ENCODE measurements at regions of chr2 and their contacts with region 1.

Region 1: DNA sequence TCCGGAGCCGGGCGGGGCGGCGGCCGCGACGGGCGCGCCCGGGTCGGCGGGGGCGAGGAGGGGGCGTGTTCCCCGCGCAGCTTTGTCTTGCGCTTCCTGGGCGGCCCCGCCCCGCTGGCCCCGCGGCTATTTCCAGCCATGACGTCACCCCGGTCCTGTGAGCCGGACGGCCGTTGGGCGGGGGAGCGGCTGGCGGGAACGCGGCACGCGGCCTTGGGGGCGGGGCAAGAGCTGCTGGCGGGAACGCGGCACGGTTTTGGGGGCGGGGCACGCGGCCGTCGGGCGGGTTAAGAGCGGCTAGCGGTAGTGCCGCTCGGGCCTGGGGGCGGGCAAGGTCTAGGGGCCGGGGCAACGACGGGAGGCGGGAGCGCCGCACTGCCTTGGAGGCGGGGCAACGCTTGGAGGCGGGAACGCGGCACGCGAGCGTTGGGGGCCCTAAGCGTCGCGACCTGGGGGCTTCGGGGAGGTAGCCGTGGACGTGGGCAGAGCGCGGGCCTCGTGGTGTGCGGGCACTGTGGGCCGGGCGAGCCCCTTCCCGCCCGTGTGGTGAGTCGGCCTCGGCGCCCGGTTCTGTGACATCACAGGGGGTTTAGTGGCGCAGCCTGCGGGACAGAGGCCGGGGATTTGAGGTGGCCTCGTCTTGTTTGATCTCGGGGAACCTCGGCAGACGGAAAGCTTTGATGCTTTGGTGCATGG is 704 bp downstream of the KLF11 start:
- DNase-seq: peak; percentile 90 to 97 (median 96)
- H3K4me3 ChIP-seq: peak overlapping the region; percentile 39 to 57 (median 44)
- H3K4me3 Mint-ChIP-seq: peak overlapping the region; percentile 73 to 79
- H3K27ac ChIP-seq: peak overlapping the region; percentile 66 to 79
- H3K27ac Mint-ChIP-seq: peak overlapping the region; percentile 13 to 98 (median 76)
- H3K4me1 ChIP-seq: peaks cover 16 to 34% of the 10 kb centered on the region in 2 donors
- H3K4me1 Mint-ChIP-seq: peaks cover 46% of the 10 kb centered on the region
- H3K27me3 ChIP-seq: no peaks in the 10 kb centered on the region
- H3K27me3 Mint-ChIP-seq: peaks cover 2 to 25% (median 11%) of the 10 kb centered on the region in 3 donors
- CTCF ChIP-seq: no peak

Region 2: DNA sequence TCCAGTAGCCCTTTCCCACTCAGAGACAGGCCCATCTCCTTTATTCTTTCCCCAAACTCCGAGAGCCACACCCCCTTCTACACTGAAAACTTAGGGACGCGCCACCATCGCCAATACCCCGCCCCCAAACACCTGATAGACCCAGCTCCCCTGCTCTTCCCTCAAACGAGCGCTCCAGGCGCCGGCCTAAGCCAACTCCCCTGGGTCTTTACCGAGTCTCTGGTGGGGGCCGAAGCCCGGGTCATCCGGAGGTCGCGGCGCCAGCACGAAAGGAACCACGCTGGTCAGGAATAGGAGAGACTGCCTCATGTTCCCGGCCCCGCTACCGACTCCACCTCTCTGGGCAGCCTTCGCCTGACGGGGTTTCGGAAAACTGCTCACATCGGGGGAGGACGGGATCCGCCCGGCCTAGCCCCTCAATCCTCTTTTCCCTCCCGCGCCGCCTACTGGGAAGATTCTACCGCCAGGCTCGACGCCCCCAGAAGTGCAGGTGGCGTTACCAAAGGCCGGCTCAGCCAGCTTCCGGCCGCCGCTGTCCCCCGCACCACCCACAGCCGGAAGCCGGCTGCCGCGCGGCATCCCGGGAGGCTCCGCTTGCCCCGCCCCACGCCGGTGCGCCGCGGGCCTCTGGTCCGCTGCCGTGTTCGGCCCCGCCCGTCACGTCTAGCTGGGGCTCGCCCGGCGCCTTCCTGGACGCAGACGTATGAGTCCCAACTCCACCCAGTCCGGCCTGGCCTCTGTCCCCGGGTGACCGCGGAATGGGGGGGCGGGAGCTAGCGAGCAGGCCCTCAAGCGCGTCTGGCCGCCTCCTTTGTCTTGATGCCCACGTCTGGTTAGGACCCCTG is 488.5 kb before region 1 on chr2 and contains the start of gene ADAM17:
- intact Hi-C with region 1: loop called in 1 of 2 experiments (anchors 10 kb)
- DNase-seq: peak; percentile 96 to 97 (median 97)
- H3K4me3 ChIP-seq: peak within 1 kb of the TSS; percentile 68 to 100 (median 99)
- H3K4me3 Mint-ChIP-seq: peak within 1 kb of the TSS; percentile 96 to 98
- H3K27ac ChIP-seq: peak within 1 kb of the TSS; percentile 98 to 99
- H3K27ac Mint-ChIP-seq: peak within 1 kb of the TSS; percentile 98 to 100 (median 99)
- H3K4me1 ChIP-seq: peaks cover 45 to 54% of the 10 kb centered on the region in 2 donors
- H3K4me1 Mint-ChIP-seq: peaks cover 46% of the 10 kb centered on the region
- H3K27me3 ChIP-seq: no peaks in the 10 kb centered on the region
- H3K27me3 Mint-ChIP-seq: peaks cover 0 to 6% (median 4%) of the 10 kb centered on the region in 3 donors
- CTCF ChIP-seq: no peak
- polyA plus RNA-seq, gene ADAM17: 30.2 to 34.8 (median 30.9) TPM

Region 3: DNA sequence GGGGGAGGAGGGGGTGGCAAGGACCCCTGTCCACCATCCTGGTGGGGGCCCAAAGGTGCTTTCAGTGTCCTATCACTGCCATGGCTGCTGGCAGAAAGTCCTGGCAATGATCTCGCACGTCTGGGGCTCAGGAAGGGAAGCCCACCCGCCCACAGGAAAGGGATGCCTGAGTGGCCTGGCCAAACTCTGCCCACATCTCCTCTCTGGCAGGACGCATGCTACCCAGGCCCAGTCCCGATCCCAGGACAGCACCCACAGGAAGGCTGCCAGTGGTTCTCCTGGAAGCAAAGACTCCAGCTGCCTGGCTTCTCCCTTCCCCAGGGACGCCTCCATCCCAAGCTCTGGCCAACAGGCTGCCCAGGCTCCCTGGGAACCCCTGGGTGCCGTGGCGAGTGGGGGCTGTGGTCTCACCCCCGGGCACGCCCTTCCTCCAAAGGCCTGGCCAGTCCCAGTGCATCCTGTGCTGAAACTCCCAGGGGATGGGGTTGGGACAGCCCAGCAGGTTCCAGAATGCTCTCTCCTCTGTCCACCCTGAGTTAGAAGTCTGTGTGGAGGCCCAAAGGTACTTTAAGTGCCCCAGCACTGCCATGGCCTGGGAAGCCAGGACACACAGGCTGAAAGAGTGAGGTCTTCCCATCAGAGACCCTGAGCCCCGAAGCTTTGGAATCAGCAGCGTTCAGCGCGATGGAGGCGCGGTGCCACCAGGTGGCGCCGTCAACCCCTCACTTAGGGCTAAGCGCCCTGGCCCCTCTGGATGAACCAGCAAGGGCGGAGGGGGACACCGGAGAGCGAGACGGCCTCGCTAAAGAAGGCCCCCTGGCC is 230.5 kb before region 1 on chr2:
- intact Hi-C with region 1: loop called (anchors 5 to 10 kb)
- DNase-seq: peak; percentile 42 to 65 (median 53)
- H3K4me3 ChIP-seq: peak overlapping the region in 1 of 3 experiments; percentile 53
- H3K4me3 Mint-ChIP-seq: peak overlapping the region in 1 of 2 donors; percentile 79
- H3K27ac ChIP-seq: no peak overlapping the region
- H3K27ac Mint-ChIP-seq: no peak overlapping the region
- H3K4me1 ChIP-seq: peaks cover 24 to 34% of the 10 kb centered on the region in 2 donors
- H3K4me1 Mint-ChIP-seq: peaks cover 28% of the 10 kb centered on the region
- H3K27me3 ChIP-seq: peaks cover 0 to 5% of the 10 kb centered on the region in 2 donors
- H3K27me3 Mint-ChIP-seq: peaks cover 10 to 14% (median 11%) of the 10 kb centered on the region in 3 donors
- CTCF ChIP-seq: peak; percentile 97

Region 4: DNA sequence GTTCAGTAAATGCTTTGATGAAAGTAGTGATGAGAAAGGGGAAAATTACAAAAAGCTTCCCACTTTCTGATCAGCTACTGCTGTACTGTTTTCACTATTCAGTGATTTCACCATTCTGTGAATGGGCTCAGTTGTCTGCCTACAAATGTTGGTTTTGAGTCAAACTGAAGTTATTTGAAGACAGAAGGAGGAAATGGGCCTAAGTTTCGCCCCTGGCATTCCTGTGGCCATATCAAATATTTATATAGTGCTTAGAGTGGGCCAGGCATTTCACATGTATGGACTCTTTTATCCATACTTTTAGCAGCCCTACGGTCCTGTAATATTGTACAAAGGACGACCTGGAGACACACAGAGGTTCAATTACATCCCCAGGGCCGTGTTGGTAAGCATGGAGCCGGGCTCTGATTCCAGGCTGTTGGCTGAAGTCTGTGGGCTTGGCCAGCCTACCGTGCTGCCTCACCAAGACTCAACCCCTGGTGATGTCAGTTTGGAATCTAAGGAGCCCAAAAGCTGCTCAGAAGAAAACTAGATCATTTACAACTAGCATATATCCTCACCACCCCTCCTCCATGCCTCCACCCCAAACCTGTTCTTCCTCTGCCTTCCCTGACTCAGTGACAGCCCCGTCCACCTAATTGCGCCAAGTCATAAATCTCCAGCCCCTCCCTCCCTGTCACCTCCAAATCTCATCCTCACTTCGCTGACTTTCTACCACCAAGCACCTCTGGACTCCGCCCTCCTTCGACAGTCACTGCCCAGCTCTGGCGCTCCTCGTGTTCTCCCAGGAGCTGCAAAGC is 102.7 kb before region 1 on chr2:
- intact Hi-C with region 1: no loop called
- DNase-seq: no peak
- H3K4me3 ChIP-seq: no peak overlapping the region
- H3K4me3 Mint-ChIP-seq: no peak overlapping the region
- H3K27ac ChIP-seq: no peak overlapping the region
- H3K27ac Mint-ChIP-seq: peak overlapping the region in 1 of 7 donors; percentile 84
- H3K4me1 ChIP-seq: no peaks in the 10 kb centered on the region
- H3K4me1 Mint-ChIP-seq: no peaks in the 10 kb centered on the region
- H3K27me3 ChIP-seq: peaks cover 0 to 14% of the 10 kb centered on the region in 2 donors
- H3K27me3 Mint-ChIP-seq: peaks cover 9 to 32% (median 17%) of the 10 kb centered on the region in 3 donors
- CTCF ChIP-seq: no peak

Region 5: GRCh38 chr2:9967053-9967775 is 76.8 kb before region 1 on chr2:
- intact Hi-C with region 1: no loop called
- DNase-seq: peak in 2 of 3 donors; percentile 11 to 15
- H3K4me3 ChIP-seq: no peak overlapping the region
- H3K4me3 Mint-ChIP-seq: no peak overlapping the region
- H3K27ac ChIP-seq: no peak overlapping the region
- H3K27ac Mint-ChIP-seq: no peak overlapping the region
- H3K4me1 ChIP-seq: no peaks in the 10 kb centered on the region
- H3K4me1 Mint-ChIP-seq: peaks cover 5% of the 10 kb centered on the region
- H3K27me3 ChIP-seq: peaks cover 0 to 3% of the 10 kb centered on the region in 2 donors
- H3K27me3 Mint-ChIP-seq: peaks cover 3 to 6% (median 6%) of the 10 kb centered on the region in 3 donors
- CTCF ChIP-seq: no peak

Region 6: GRCh38 chr2:9984217-9984739 is 59.8 kb before region 1 on chr2:
- intact Hi-C with region 1: loop called (anchors 2 kb)
- DNase-seq: peak; percentile 52 to 74 (median 61)
- H3K4me3 ChIP-seq: no peak overlapping the region
- H3K4me3 Mint-ChIP-seq: peak overlapping the region; percentile 45 to 70
- H3K27ac ChIP-seq: no peak overlapping the region
- H3K27ac Mint-ChIP-seq: peak overlapping the region in 3 of 7 donors; percentile 32 to 73 (median 65)
- H3K4me1 ChIP-seq: peaks cover 3 to 8% of the 10 kb centered on the region in 2 donors
- H3K4me1 Mint-ChIP-seq: peaks cover 7% of the 10 kb centered on the region
- H3K27me3 ChIP-seq: no peaks in the 10 kb centered on the region
- H3K27me3 Mint-ChIP-seq: peaks cover 10 to 17% (median 13%) of the 10 kb centered on the region in 3 donors
- CTCF ChIP-seq: peak; percentile 79

Measured in CD14-positive monocyte (primary cell).